ENCODE measurements at regions of chr7 and their contacts with region 1.

Region 1: DNA sequence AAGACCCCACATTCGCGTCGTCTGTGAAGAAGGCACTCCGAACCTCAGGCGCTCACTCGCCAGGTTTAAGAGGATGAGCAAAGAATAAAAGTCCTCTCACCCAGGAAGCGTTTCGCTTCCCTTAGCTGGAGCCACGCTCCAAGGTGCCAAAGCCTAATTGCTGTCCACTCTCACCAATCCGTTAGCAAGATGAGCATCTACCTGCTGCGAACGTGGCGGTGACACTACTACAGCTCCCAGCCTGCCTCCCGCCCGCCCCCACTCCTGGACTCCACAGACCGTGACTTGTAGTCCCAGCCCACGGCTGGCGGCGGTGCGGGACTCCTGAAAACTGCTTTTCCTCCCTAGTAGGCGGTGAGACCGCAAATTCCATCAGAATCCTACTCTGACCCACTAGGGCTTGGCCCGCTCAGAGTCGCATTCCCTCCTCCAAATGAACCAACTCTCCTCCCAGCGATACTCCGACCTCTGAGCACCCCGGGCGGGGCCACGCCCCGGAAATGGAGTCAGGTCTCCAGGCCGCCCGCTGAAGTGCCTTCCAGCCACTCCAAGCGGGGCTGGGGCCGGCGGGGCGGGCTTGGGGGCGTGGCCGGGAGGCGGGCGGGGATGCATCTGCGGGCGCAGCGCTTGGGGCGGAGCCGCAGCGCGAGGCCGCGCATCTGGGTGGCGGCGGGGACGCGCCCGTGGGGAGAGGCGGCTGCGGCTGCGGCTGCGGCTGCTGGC is 521 bp upstream of the PTPN12 start:
- DNase-seq: peak; percentile 93
- ATAC-seq: peak; percentile 90
- H3K4me3 ChIP-seq: peak overlapping the region; percentile 67
- H3K27ac ChIP-seq: peak overlapping the region; percentile 79
- H3K4me1 ChIP-seq: peaks cover 5% of the 10 kb centered on the region
- H3K27me3 ChIP-seq: no peaks in the 10 kb centered on the region
- CTCF ChIP-seq: no peak
- POLR2A ChIP-seq: peak; percentile 80
- RAD21 ChIP-seq: no peak

Region 2: DNA sequence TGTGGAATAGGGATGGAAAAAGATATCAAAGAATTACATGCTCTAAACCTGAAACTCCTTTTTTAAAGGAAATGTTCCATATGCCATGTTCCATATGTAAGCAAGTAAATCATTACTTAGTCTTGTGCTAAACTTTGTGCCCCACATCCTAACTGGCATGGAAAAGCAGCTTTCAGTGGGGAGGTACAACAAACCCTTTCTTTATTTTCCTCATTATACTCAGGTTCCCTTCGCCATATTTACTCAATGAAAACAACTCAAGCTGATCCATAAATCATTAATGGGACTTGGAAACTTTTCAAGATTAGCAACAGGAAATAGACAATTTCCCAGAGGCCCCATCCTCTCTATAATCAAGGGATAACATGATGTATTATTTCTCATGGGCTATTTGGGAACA is 176.5 kb before region 1 on chr7:
- CTCF ChIA-PET with region 1: no interaction called
- POLR2A ChIA-PET with region 1: no interaction called
- dilution Hi-C with region 1: no loop called
- in situ Hi-C with region 1: no loop called
- intact Hi-C with region 1: loop called (anchors 5 kb)
- DNase-seq: no peak
- ATAC-seq: no peak
- H3K4me3 ChIP-seq: no peak overlapping the region
- H3K27ac ChIP-seq: no peak overlapping the region
- H3K4me1 ChIP-seq: no peaks in the 10 kb centered on the region
- H3K27me3 ChIP-seq: no peaks in the 10 kb centered on the region
- CTCF ChIP-seq: no peak
- POLR2A ChIP-seq: no peak
- RAD21 ChIP-seq: no peak

Region 3: GRCh38 chr7:77409739-77410547 is 126.6 kb before region 1 on chr7:
- CTCF ChIA-PET with region 1: no interaction called
- POLR2A ChIA-PET with region 1: no interaction called
- dilution Hi-C with region 1: no loop called
- in situ Hi-C with region 1: no loop called
- intact Hi-C with region 1: loop called (anchors 5 kb)
- DNase-seq: peak; percentile 87
- ATAC-seq: peak; percentile 84
- H3K4me3 ChIP-seq: no peak overlapping the region
- H3K27ac ChIP-seq: peak overlapping the region; percentile 48; the same call in 1 of the 2 replicates
- H3K4me1 ChIP-seq: peaks cover 3% of the 10 kb centered on the region; the same call in 1 of the 2 replicates
- H3K27me3 ChIP-seq: no peaks in the 10 kb centered on the region
- CTCF ChIP-seq: no peak
- POLR2A ChIP-seq: no peak
- RAD21 ChIP-seq: no peak

Region 4: DNA sequence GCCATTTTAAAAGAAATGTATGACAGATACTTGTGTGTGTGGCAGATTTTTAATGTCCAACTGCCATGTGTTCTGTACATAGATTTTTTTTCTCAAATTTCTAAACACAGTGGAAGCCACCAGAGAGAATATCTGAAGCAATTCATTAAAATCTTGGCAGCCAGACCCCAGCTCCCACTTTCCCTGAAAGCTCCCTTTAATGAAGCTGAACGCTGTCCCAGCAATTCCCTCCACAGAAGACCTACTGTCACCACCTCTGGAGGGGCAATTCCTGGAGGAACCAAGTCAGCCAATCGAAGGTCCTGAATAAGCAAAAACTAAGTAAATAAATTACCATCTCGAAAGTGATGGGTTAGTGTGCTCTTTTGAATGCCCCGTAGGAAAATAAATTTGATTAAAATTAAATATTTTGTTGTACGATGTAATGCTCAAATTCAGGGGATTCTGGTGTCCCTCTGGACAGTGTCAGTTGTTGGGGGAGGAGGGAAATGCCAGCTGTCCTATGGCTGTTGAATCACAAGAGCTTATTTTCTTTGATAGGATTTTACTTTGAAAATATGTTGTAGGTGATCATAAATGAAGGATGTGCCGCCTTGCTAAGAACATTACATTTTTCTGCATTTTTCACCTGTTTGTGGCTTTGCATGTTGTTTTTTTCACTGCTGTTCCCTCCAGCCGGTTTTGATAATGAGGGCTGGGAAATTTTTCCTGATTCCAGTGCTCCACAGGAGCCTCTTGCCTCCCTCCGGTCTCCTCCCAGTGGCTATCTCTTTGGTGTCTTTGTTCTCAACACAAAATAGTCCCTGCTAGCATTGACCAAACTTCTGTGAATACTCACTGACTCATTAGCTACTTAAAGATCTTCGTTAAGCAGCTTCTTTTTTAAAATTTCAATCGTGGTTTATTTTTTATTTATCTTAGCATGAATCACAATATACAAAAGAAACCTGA is 111.2 kb before region 1 on chr7:
- CTCF ChIA-PET with region 1: no interaction called
- POLR2A ChIA-PET with region 1: interaction called, 8 read pairs
- dilution Hi-C with region 1: no loop called
- in situ Hi-C with region 1: no loop called
- intact Hi-C with region 1: loop called (anchors 1 kb)
- DNase-seq: peak; percentile 91
- ATAC-seq: peak; percentile 82
- H3K4me3 ChIP-seq: peak overlapping the region; percentile 38
- H3K27ac ChIP-seq: peak overlapping the region; percentile 38
- H3K4me1 ChIP-seq: peaks cover 16% of the 10 kb centered on the region
- H3K27me3 ChIP-seq: no peaks in the 10 kb centered on the region
- CTCF ChIP-seq: 0 out of 2 replicates have a peak, but pooled peaks have one; percentile 4
- POLR2A ChIP-seq: no peak
- RAD21 ChIP-seq: no peak

Measured in IMR-90 (cell line).